ENCODE measurements at regions of chr11 and their contacts with region 1.

Region 1: GRCh38 chr11:67656278-67656922 is 5.9 kb upstream of the ACY3 start:
- DNase-seq: no peak
- ATAC-seq: peak; percentile 37
- H3K4me3 Mint-ChIP-seq: no peak overlapping the region
- H3K27ac Mint-ChIP-seq: no peak overlapping the region
- H3K4me1 Mint-ChIP-seq: peaks cover 8% of the 10 kb centered on the region
- H3K27me3 Mint-ChIP-seq: peaks cover 3% of the 10 kb centered on the region

Region 2: DNA sequence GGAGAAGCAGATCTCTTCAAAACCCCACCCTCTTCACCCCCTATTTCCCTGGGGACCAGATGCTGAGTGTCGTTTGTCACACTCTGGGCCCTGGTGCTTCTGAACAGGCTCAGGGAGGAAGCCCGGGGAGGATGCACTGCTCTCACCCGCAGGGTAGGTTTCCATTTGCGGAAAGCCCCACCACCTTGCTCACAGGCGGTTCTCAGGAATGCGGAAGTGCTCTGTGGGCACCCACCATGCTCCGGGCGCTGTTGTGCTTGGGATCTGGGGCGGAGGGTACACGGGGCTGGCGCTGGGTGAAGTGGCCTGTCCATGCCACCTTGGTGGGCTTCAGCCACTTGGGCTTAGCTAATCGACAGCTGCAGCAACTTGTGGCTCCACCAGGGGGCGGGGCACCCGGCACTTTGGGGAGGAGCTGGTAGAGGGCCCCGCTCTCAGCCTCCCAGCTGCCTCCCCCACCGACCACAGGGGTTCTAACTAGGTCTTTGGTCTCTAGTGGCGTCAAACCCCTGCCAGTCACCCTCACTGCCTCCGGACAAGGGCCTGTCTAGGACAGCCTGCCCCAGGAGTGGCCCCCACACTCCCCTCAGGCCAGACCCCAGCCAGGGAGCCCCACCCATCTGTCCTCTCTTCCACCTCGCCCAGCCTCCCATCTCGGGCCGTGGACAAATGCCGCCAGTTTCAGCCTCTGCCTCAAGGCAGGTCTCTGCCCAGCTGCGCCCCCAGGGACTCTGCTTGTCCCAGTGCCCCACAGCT is 42.3 kb before region 1 on chr11:
- CTCF ChIA-PET with region 1: interaction called, 5 read pairs
- POLR2A ChIA-PET with region 1: no interaction called
- intact Hi-C with region 1: loop called in 1 of 2 experiments (anchors 1 kb)
- DNase-seq: peak; percentile 92
- ATAC-seq: peak; percentile 90
- H3K4me3 Mint-ChIP-seq: peak overlapping the region; percentile 67
- H3K27ac Mint-ChIP-seq: peak overlapping the region; percentile 93
- H3K4me1 Mint-ChIP-seq: peaks cover 22% of the 10 kb centered on the region
- H3K27me3 Mint-ChIP-seq: no peaks in the 10 kb centered on the region